ENCODE measurements at regions of chr4 and their contacts with region 1.

Region 1: DNA sequence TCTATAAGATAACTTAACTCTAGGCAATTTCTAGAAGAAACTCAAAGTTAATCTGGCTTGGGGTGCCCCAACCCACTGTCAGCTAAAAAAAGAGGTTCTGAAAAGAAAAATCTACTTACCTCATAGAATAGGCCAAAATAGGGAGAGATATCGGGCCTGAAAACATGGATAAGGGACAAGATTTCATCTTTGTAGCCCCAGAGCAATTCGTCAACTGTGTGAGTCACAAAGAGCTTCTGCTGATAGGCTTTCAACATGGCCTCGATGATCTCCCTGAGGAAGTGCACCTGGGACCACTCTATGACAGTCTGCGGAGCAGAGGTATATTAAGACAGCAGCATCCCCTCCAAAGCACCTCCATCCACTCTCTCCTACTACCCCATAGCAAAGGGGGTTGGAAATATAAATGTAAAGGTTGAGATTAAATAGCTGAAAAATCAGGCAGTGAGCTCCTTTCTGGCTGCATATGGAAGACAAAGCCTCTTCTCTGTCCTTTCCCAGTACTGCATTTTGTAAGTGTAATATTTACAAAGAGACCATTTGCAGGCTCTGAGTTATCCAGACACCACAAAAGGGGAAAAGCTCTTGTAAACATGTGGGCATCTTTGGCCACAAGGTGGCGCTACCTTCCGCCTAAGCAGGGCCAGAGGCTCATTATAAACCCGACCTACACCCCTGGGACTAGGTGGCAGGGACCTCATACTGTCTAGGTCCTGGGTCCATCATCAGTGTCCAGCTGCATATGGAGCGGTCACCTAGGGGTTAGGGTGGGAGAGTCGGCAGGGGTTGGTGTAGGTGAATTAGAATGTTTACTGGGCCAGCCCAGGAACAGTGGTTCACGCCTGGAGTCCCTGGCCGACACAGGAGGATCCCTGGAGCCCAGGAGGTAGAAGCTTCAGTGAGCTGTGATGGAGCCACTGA is 31.5 kb upstream of the NUP54 start:
- DNase-seq: peak; percentile 94
- ATAC-seq: peak; percentile 96
- H3K4me3 Mint-ChIP-seq: no peak overlapping the region
- H3K27ac Mint-ChIP-seq: no peak overlapping the region
- H3K4me1 Mint-ChIP-seq: no peaks in the 10 kb centered on the region
- H3K27me3 Mint-ChIP-seq: no peaks in the 10 kb centered on the region
- CTCF ChIP-seq: peak; percentile 93

Region 2: GRCh38 chr4:76035141-76035540 is 144.5 kb before region 1 on chr4:
- CTCF ChIA-PET with region 1: no interaction called
- POLR2A ChIA-PET with region 1: no interaction called
- intact Hi-C with region 1: no loop called
- DNase-seq: no peak
- ATAC-seq: no peak
- H3K4me3 Mint-ChIP-seq: no peak overlapping the region
- H3K27ac Mint-ChIP-seq: no peak overlapping the region
- H3K4me1 Mint-ChIP-seq: peaks cover 4% of the 10 kb centered on the region
- H3K27me3 Mint-ChIP-seq: peaks cover 4% of the 10 kb centered on the region
- CTCF ChIP-seq: no peak

Region 3: GRCh38 chr4:76198411-76199237 is 19.0 kb after region 1 on chr4:
- CTCF ChIA-PET with region 1: interaction called, 37 read pairs
- POLR2A ChIA-PET with region 1: no interaction called
- intact Hi-C with region 1: no loop called
- DNase-seq: peak; percentile 79
- ATAC-seq: peak; percentile 78
- H3K4me3 Mint-ChIP-seq: no peak overlapping the region
- H3K27ac Mint-ChIP-seq: peak overlapping the region; percentile 7
- H3K4me1 Mint-ChIP-seq: peaks cover 47% of the 10 kb centered on the region
- H3K27me3 Mint-ChIP-seq: no peaks in the 10 kb centered on the region
- CTCF ChIP-seq: no peak

Region 4: GRCh38 chr4:76213415-76214176 is 33.9 kb after region 1 on chr4 and contains the start of gene SCARB2:
- CTCF ChIA-PET with region 1: interaction called, 33 read pairs
- POLR2A ChIA-PET with region 1: no interaction called
- intact Hi-C with region 1: no loop called
- DNase-seq: peak; percentile 82
- ATAC-seq: peak; percentile 77
- H3K4me3 Mint-ChIP-seq: peak within 1 kb of the TSS; percentile 83
- H3K27ac Mint-ChIP-seq: peak within 1 kb of the TSS; percentile 90
- H3K4me1 Mint-ChIP-seq: peaks cover 31% of the 10 kb centered on the region
- H3K27me3 Mint-ChIP-seq: no peaks in the 10 kb centered on the region
- CTCF ChIP-seq: no peak
- total RNA-seq, gene SCARB2: 2.6 to 3.1 TPM

Region 5: DNA sequence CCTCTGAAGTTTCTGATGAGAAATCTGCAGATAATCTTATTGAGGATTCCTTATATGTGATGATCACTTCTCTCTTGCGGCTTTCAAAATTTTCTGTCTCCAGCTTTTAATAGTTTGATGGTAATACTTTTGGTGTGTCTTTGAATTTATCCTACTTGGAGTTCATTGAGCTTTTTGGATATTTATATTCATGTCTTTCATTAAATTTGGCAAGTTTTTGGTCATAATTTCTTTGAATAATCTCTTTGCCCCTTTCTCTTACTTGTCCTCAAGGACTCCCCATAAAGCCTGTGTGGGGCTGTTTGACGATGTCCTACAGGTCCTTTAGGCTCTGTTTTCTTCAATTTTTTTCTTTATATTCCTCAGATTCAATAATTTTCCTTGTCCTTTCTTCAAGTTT is 60.6 kb after region 1 on chr4:
- CTCF ChIA-PET with region 1: interaction called, 18 read pairs
- POLR2A ChIA-PET with region 1: no interaction called
- intact Hi-C with region 1: no loop called
- DNase-seq: no peak
- ATAC-seq: no peak
- H3K4me3 Mint-ChIP-seq: no peak overlapping the region
- H3K27ac Mint-ChIP-seq: no peak overlapping the region
- H3K4me1 Mint-ChIP-seq: no peaks in the 10 kb centered on the region
- H3K27me3 Mint-ChIP-seq: peaks cover 2% of the 10 kb centered on the region
- CTCF ChIP-seq: no peak

Region 6: DNA sequence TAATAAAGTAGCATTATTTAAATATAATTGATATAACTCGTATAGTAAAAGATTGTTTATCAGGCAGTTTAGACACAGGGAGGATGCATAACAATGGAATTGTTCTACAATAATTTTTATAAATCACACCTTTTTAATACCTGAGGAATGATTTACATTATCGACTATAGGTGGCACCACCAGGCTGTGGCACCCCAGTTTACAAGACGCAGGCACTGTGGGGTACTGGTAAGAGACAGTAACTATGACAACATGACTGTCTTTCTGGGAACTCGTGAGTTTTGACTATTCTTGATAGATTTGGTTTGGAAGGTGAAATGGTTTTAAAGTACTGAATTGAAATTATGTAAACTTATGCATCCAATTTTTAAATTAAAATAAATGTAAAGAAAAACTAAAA is 99.8 kb after region 1 on chr4:
- CTCF ChIA-PET with region 1: interaction called, 18 read pairs
- POLR2A ChIA-PET with region 1: no interaction called
- intact Hi-C with region 1: no loop called
- DNase-seq: peak; percentile 53
- ATAC-seq: peak; percentile 58
- H3K4me3 Mint-ChIP-seq: no peak overlapping the region
- H3K27ac Mint-ChIP-seq: no peak overlapping the region
- H3K4me1 Mint-ChIP-seq: peaks cover 2% of the 10 kb centered on the region
- H3K27me3 Mint-ChIP-seq: peaks cover 8% of the 10 kb centered on the region
- CTCF ChIP-seq: peak; percentile 43

Region 7: DNA sequence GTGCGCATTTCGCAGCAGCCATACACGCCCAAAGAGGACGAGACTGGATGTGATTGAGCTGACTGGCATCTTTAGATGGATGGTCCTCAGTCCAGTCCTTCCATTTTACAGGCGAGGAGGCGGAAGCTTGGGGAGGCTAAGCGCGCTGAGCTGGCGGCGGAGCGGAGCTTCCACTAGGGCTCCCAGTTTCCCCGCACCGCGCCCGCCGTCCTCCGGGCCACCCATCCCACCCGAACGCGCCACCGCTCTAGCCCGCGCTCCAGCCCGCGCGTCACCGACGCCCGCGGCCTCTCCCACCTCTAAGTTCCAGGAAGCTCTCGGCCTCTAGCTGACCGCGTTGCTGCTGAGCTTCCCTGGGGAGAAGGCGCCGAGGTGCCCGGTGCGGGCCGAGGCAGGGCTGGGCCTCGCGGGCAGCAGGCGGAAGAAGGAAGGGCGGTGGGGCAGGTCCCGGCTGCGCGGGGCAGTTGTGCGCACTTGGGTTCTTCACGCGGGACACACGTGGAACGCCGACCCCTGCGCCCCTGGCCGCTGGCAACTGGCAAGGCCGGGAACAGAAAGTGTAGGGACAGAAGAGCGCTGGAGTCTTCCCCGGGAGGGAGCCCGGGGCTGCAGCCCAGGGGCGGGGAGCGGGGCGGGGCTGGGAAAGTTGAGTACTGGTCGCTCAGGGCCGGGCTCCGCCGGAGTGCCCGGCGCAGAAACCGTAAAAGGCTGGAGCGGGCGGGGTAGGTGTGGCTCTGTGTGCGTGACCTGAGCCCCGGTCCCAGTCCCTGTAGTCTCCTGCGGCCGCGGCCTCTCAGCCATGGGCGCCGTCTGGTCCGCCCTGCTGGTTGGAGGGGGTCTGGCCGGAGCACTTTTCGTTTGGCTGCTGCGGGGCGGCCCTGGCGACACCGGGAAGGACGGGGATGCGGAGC is 126.6 kb after region 1 on chr4 and contains the start of gene STBD1:
- CTCF ChIA-PET with region 1: interaction called, 27 read pairs
- POLR2A ChIA-PET with region 1: no interaction called
- intact Hi-C with region 1: no loop called
- DNase-seq: peak; percentile 32
- ATAC-seq: peak; percentile 19
- H3K4me3 Mint-ChIP-seq: peak within 1 kb of the TSS; percentile 71
- H3K27ac Mint-ChIP-seq: peak within 1 kb of the TSS; percentile 16
- H3K4me1 Mint-ChIP-seq: peaks cover 30% of the 10 kb centered on the region
- H3K27me3 Mint-ChIP-seq: peaks cover 16% of the 10 kb centered on the region
- CTCF ChIP-seq: no peak
- total RNA-seq, gene STBD1: 0.18 to 0.29 TPM

Region 8: GRCh38 chr4:76504613-76505465 is 325.2 kb after region 1 on chr4:
- CTCF ChIA-PET with region 1: interaction called, 15 read pairs
- POLR2A ChIA-PET with region 1: no interaction called
- intact Hi-C with region 1: no loop called
- DNase-seq: no peak
- ATAC-seq: peak; percentile 45
- H3K4me3 Mint-ChIP-seq: no peak overlapping the region
- H3K27ac Mint-ChIP-seq: no peak overlapping the region
- H3K4me1 Mint-ChIP-seq: no peaks in the 10 kb centered on the region
- H3K27me3 Mint-ChIP-seq: peaks cover 12% of the 10 kb centered on the region
- CTCF ChIP-seq: peak; percentile 75

Measured in activated CD8-positive, alpha-beta T cell treated with anti-CD3 and anti-CD28 coated beads for 36 hours (primary cell).